GM13976 (cell line): ENCODE measurements at regions of chr1 and their contacts with region 1.

Region 1: DNA sequence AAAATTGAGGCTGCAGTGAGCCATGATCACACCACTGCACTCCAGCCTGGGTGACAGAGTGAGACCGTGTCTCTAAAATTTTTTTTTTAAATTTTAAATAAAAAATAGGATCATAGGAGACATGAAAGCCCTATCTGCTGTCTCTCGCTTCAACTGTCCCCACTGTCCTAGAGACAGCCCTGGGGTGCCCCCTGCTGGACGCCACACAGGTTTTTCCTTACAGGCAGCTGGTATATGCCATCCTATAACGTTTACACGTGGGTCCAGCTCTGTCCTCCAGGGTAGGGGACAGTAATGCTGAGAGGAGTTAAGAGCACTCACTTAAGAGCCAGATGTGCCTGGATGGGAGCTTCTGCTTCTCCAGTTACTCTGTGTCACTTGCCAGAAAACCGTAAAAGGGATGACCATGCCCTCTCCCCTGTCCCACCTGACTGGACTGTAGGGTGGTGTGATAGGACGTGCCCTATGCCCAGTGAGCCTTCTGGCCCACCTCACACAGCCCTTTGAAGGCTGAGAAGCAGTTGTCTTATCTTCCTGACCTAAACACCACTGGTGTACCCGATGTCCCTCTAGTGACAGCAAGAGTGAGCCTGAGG is 8.5 kb downstream of the FBXO2 start:
- DNase-seq: peak; percentile 75
- CTCF ChIP-seq: peak; percentile 49

Region 2: DNA sequence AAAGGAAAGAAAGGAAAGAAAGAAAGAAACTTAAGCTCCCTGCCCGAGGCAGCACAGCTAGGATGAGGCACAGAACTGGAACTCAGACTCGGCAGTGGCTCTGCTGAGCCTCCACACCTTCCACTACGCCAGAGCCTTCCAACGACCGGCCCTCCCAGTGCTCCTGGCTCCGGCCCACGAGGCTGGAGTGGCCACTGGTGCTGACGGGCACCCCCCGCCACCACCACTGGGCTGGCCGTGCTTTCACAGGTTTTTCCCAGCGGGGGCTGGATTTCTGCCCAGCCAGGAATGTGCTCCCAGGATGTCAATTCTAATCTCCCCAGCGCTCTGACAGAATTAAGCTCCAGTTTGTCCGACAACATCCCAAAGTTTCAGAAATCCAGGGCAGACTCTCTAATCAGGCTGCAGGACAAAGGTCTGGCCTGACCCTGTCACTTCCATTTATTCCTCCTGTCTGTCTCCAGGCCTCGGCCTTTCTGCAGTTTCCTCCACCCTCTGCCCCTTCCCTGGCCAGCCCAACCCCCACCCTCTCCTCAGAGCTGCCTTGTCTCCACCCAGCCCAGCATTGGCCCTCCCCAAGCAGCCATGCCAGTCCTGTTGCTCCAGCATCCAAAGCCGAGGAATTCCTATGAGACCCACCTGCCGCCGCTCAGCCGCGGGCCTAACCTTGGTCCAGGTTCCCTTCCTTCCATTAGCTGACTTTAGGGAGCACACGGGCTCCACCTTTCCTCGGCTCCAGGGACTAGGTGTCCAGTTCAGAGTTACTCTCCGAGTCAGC is 931.2 kb before region 1 on chr1:
- in situ Hi-C with region 1: no loop called
- DNase-seq: no peak
- CTCF ChIP-seq: no peak

Region 3: DNA sequence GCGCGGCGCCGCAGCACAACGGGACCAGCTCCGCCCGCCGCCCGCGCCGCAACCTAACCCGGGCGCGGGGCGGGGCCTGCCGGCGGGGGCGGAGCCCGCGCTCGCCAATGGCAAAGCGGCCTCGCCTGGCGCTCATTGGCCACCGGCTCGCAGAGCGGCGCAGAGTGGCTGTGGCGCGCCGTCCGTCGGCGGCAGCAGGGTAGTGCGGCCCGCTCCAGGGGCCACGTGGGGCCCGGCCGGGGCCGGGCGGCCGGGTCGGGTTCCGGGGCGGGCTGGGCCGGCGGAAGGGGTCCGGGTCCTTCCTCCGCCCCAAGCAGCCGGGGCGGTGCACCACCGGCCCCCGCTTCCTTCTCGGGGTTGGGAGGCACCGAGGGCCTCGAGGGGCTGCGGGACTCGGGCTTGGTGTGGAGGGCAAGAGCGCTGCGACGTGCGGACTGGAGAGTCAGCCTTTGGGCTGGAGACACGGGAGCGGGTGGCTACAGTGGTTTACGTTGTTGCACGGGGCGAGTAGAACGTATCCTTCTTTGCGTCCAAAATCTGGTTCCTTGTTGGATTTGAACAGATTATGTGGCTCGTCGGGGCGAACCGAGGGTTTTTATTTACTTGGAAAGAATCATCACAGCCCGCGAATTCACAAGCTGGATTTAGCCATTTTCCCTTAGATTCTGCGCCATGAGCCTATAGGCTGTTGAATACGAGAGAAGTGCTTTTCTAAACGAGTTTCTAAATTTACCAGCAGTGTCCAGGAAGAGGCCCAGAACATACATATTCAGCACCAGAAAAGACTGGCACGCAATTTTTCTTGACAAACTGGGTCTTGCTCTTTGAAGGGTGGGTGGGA is 585.6 kb before region 1 on chr1 and contains the start of gene SRM:
- in situ Hi-C with region 1: loop called (anchors 25 kb)
- DNase-seq: peak; percentile 99
- CTCF ChIP-seq: peak; percentile 33

Region 4: DNA sequence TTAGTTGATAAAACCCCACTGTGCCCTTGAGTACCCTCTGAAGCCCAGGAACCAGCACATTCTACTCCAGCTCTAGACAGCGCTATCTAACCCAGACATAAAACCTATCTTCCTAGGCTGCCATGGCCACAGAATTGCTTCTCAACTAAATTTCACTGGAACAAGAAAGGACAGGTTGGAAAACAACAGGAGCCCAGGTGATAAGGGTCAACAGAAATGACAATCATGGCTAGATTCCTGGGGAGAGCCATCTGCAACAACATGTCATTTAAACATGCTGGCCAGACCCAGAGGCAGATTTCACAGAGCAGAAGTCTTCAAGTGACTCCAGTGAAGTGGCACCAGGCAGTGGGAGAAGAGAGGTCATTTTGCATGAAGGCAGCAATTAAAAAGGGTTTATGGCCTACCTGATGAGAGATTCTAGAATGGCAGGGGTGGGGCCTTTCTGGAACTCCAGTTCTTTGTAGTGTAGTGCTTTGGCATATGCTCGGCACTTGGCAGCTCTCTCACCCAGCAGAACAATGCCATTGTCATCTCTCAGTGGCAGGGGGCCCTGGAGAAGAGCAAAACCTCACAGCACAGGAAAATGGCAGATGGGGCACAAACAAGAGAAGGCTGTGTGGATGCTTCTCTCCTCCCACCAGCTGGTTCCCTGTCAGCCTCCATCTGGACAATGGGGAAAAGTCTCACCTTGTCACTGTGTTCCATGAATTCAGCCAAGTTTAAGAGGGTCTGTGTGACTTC is 446.7 kb before region 1 on chr1:
- in situ Hi-C with region 1: no loop called
- DNase-seq: no peak
- CTCF ChIP-seq: no peak

Region 5: DNA sequence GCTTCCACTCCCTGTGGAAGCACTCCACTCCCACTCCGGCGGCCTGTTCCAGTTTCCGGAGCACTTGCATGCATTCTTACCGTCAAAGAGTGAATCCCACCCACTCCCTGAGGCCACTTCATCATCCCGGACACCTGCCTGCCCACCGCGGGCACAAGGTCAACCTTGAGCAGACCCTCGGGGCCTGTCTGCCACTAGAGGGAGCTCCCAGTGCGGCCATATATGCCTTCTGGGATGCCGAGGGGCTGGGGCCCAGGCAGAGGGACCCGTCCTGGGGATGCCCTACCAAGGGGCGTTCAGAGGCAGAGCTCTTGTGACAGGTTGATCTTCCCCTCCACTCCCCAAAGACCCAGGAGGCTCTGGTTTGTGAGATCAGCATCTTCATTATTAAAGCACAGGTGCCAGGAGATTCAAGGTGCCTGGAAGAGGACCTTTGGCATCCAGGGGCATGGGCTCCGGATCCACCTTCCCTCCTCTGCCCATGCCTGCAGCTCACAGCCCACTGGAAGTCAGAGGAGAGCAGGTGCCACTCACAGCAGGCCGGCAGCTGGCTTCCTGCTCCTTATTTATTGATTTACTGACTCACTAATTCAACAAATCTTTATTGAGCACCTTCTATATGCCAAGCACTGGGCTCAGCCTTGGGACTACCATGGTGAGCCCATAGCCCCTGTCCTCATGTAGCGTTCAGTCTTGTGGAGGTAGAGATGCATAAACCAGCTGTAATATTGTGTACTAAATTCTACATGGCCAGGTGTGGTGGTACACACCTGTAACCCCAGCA is 325.4 kb before region 1 on chr1:
- in situ Hi-C with region 1: loop called (anchors 25 kb)
- DNase-seq: peak; percentile 81
- CTCF ChIP-seq: peak; percentile 71

Region 6: DNA sequence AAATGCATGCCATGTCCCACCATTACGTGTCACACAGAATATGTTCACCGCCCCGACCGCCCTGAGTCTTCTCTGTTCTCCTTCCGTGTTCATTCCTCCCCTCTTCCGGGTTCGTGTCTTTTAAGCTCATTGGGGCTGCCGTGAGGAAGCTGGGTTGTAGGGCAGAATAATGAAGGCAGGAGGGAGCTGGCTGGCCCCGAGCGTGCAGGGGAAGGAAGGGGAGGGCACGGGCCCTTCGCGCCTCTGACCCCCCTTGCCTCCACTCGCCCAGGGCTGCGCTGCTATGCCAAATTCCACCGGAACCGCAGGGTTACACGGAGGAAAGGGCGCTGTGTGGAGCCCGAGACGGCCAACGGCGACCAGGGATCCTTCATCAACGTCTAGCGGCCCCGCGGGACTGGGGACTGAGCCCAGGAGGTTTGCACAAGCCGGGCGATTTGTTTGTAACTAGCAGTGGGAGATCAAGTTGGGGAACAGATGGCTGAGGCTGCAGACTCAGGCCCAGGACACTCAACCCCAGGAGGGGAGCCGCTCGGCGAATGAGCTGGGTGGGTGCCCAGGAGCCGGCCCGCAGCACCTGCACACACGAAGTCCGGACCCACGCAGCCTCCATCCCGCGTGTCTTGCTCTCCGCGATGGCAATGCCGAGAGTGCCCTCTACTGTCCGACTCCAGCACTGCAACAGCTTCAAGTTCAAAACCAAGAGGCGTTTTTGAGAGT is 73.7 kb after region 1 on chr1:
- in situ Hi-C with region 1: loop called (anchors 10 kb)
- DNase-seq: peak; percentile 84
- CTCF ChIP-seq: peak; percentile 97